Activated CD4-positive, alpha-beta T cell treated with anti-CD3 and anti-CD28 coated beads, Interleukin-2, amount 10 ng/mL, durations not matched to agents 24 days and 14 days (primary cell): ENCODE measurements at regions of chr4 and their contacts with region 1.

Region 1: DNA sequence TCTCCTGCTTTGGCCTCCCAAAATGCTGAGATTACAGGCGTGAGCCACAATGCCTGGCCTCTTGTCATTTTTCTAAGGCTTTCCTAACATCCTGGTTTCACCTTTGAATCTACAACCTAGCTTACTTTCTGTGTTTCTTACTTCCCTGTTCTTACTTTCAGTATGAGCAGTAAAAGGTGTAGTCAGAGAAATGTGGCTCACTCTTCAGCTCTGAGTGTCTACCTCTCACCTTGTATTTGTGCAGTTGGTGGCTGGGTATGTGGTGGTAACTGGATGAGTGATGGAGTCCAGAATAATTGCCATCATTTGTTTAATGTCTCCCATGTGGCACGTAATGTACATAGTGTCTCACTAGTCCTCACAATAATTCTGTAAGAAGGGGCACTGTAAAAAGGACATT is 19.1 kb upstream of the CXCL11 start:
- DNase-seq: peak; percentile 65
- H3K4me3 Mint-ChIP-seq: no peak overlapping the region
- H3K27ac Mint-ChIP-seq: peak overlapping the region; percentile 57
- H3K4me1 Mint-ChIP-seq: peaks cover 40% of the 10 kb centered on the region
- H3K27me3 Mint-ChIP-seq: peaks cover 5% of the 10 kb centered on the region

Region 2: DNA sequence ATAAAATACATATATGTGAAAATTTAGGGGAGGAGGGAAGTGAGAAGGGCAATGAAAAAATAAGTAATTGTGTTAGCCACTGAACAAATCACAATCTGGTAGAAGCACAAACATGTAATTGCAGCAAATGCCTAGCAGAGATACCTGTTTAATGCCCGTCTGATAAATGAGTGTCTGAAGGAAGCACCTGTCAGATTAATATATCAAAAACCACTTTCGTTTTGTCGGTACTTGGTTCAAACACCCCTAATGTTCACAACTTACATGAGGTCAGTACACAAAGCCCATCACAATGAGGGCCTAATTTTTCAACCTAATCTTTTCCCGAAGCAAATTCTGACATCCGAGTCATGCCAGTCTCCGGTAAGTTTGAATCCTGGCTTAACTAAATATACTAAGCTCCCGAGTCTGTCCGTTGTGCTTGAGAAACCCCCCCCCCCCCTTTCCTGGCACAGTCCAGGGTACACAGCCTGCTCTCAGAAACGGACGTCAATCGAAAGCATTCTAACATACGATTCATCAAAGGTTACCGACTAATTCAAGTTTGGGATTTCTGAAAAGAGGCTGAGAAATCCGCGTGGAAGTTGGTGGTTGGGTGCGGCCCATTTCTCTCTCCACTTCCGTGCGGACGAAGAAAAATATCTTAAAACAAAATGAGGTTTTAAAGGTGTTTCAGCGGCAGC is 65.0 kb before region 1 on chr4:
- intact Hi-C with region 1: loop called (anchors 2 kb)
- DNase-seq: no peak
- H3K4me3 Mint-ChIP-seq: peak overlapping the region; percentile 89
- H3K27ac Mint-ChIP-seq: peak overlapping the region; percentile 81
- H3K4me1 Mint-ChIP-seq: peaks cover 31% of the 10 kb centered on the region
- H3K27me3 Mint-ChIP-seq: peaks cover 9% of the 10 kb centered on the region

Region 3: GRCh38 chr4:76002176-76002575 is 52.8 kb before region 1 on chr4:
- intact Hi-C with region 1: no loop called
- DNase-seq: no peak
- H3K4me3 Mint-ChIP-seq: no peak overlapping the region
- H3K27ac Mint-ChIP-seq: no peak overlapping the region
- H3K4me1 Mint-ChIP-seq: peaks cover 6% of the 10 kb centered on the region
- H3K27me3 Mint-ChIP-seq: peaks cover 4% of the 10 kb centered on the region

Region 4: GRCh38 chr4:76016393-76016792 is 38.6 kb before region 1 on chr4:
- intact Hi-C with region 1: no loop called
- DNase-seq: no peak
- H3K4me3 Mint-ChIP-seq: no peak overlapping the region
- H3K27ac Mint-ChIP-seq: no peak overlapping the region
- H3K4me1 Mint-ChIP-seq: peaks cover 10% of the 10 kb centered on the region
- H3K27me3 Mint-ChIP-seq: peaks cover 4% of the 10 kb centered on the region

Region 5: DNA sequence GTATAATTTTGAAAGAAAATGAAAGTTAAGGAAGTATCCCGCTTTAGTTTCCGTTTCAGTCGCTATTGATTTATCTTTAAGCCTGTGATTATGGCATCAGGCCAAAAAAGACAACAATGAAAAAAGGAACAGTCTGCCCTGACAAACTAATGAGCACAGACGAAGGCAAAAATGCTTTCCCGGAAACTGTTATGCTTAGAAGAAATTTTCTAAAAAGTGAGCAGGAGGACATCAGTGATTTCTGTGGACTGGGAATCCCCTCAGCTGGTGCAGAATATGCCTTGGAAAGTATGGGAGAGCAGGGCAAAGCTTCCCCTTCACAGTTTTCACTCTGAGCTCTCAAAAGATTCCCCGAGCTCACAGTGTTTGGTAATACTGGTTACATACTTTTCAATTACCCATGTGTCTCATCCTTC is 26.7 kb before region 1 on chr4:
- intact Hi-C with region 1: loop called (anchors 1 kb)
- DNase-seq: no peak
- H3K4me3 Mint-ChIP-seq: peak overlapping the region; percentile 70
- H3K27ac Mint-ChIP-seq: peak overlapping the region; percentile 57
- H3K4me1 Mint-ChIP-seq: peaks cover 28% of the 10 kb centered on the region
- H3K27me3 Mint-ChIP-seq: peaks cover 7% of the 10 kb centered on the region

Region 6: DNA sequence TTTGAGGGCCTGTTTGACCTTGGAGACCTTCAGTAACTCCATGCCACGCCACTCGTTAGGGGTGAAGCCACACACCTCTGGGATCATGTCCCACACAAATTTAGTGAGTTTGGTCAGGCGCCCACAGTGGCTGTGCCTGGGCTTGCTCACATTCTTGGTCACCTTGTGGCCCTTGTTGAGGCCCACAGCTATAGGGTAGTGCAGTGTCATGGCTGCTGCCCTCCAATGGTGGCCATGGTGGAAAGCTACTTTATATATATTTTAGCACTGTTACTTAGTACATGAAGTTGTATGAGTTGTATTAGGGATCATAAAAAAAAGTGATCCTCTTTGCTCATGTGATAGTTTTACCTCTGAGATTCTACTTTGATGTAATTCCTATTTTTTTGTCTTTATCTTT is 18.2 kb before region 1 on chr4:
- intact Hi-C with region 1: loop called (anchors 1 kb)
- DNase-seq: no peak
- H3K4me3 Mint-ChIP-seq: no peak overlapping the region
- H3K27ac Mint-ChIP-seq: no peak overlapping the region
- H3K4me1 Mint-ChIP-seq: peaks cover 13% of the 10 kb centered on the region
- H3K27me3 Mint-ChIP-seq: peaks cover 3% of the 10 kb centered on the region

Region 7: GRCh38 chr4:76213415-76214176 is 158.6 kb after region 1 on chr4 and contains the start of gene SCARB2:
- intact Hi-C with region 1: loop called (anchors 5 kb)
- DNase-seq: peak; percentile 93
- H3K4me3 Mint-ChIP-seq: peak within 1 kb of the TSS; percentile 86
- H3K27ac Mint-ChIP-seq: peak within 1 kb of the TSS; percentile 83
- H3K4me1 Mint-ChIP-seq: peaks cover 23% of the 10 kb centered on the region
- H3K27me3 Mint-ChIP-seq: peaks cover 32% of the 10 kb centered on the region
- total RNA-seq, gene SCARB2: 1.5 and 1.7 TPM in 2 replicates

Region 8: GRCh38 chr4:76301068-76301774 is 246.2 kb after region 1 on chr4:
- intact Hi-C with region 1: loop called (anchors 5 kb)
- DNase-seq: peak; percentile 82
- H3K4me3 Mint-ChIP-seq: no peak overlapping the region
- H3K27ac Mint-ChIP-seq: peak overlapping the region; percentile 66
- H3K4me1 Mint-ChIP-seq: peaks cover 39% of the 10 kb centered on the region
- H3K27me3 Mint-ChIP-seq: peaks cover 9% of the 10 kb centered on the region